CD8-positive, alpha-beta T cell (primary cell): ENCODE measurements at regions of chr2 and their contacts with region 1.

Region 1: DNA sequence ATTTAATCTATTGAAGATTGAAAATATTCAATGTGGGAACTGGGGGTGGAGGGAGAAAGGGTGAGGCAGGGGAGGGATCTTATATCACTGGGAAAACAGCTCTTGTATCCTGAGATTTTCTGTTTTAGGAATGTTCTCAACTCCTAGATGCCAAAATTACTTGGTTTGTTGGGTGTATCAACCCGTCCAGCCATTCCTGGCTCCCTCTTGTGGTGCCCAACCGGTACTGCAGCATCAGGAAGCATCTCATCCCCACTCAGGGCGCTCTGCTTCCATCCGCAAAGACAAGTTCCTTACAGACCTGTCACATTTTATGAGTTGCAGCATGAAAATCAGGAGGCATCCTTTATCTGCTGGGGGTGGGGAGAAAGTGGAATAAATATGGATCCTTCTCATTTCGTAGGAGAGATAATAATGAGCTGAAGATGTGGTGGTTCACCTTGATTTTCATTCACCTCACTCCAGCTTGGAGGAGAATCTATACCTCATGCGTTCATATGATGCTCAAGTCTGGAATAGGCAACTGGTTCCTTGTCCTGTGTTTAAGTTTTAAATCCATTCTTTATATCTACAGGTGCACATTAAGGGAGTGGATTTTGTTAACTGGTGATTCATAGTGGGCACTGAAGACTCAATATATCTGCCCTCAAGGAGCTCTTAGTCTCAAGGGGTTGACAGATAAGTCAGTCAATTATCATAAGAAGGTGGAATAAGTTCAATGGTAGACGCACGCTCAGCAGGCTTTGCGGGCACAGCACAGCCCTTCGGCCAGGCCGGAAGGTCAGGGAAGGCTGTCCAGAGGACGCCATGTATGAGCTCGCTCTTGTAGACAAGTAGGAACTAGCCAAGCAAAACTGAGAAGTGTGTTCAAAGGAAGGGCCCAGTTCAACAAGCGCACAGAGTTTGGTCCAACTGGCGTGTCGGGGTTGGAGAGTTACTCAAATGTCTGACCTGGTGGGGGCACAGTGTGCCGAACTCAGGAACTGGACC is 127.3 kb downstream of the RNF144A start:
- DNase-seq: peak; percentile 13 to 81 (median 62)
- ATAC-seq: peak; percentile 86
- H3K4me3 ChIP-seq: no peak overlapping the region
- H3K4me3 Mint-ChIP-seq: no peak overlapping the region
- H3K27ac ChIP-seq: no peak overlapping the region
- H3K27ac Mint-ChIP-seq: peak overlapping the region; percentile 15
- H3K4me1 ChIP-seq: no peaks in the 10 kb centered on the region
- H3K4me1 Mint-ChIP-seq: peaks cover 16% of the 10 kb centered on the region
- H3K27me3 ChIP-seq: no peaks in the 10 kb centered on the region
- H3K27me3 Mint-ChIP-seq: no peaks in the 10 kb centered on the region
- CTCF ChIP-seq: peak; percentile 97

Region 2: GRCh38 chr2:6545336-6545735 is 499.2 kb before region 1 on chr2:
- CTCF ChIA-PET with region 1: no interaction called
- POLR2A ChIA-PET with region 1: no interaction called
- intact Hi-C with region 1: no loop called
- DNase-seq: no peak
- ATAC-seq: no peak
- H3K4me3 ChIP-seq: no peak overlapping the region
- H3K4me3 Mint-ChIP-seq: no peak overlapping the region
- H3K27ac ChIP-seq: no peak overlapping the region
- H3K27ac Mint-ChIP-seq: no peak overlapping the region
- H3K4me1 ChIP-seq: no peaks in the 10 kb centered on the region
- H3K4me1 Mint-ChIP-seq: no peaks in the 10 kb centered on the region
- H3K27me3 ChIP-seq: no peaks in the 10 kb centered on the region
- H3K27me3 Mint-ChIP-seq: no peaks in the 10 kb centered on the region
- CTCF ChIP-seq: no peak

Region 3: DNA sequence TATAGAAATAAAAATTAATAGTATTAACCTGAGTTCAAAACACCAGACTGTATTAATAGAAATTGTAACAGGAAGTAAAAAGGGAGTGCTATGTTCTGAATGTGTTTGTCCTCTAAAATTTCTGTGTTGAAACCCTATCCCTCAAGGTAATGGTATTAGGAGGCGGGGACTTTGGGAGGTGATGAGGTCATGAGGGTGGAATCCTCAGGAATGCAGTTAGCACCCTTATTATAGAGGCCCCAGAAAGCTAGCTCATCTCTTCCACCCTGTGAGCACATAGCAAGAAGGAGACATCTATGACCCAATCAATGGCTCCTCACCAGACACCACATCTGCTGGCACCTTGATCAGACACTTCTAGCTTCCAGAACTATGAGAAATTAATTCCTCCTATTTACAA is 303.3 kb before region 1 on chr2:
- CTCF ChIA-PET with region 1: no interaction called
- POLR2A ChIA-PET with region 1: no interaction called
- intact Hi-C with region 1: no loop called
- DNase-seq: no peak
- ATAC-seq: no peak
- H3K4me3 ChIP-seq: no peak overlapping the region
- H3K4me3 Mint-ChIP-seq: no peak overlapping the region
- H3K27ac ChIP-seq: no peak overlapping the region
- H3K27ac Mint-ChIP-seq: no peak overlapping the region
- H3K4me1 ChIP-seq: no peaks in the 10 kb centered on the region
- H3K4me1 Mint-ChIP-seq: no peaks in the 10 kb centered on the region
- H3K27me3 ChIP-seq: no peaks in the 10 kb centered on the region
- H3K27me3 Mint-ChIP-seq: peaks cover 19% of the 10 kb centered on the region
- CTCF ChIP-seq: no peak

Region 4: GRCh38 chr2:6877402-6878304 is 166.9 kb before region 1 on chr2 and contains the start of gene RSAD2:
- CTCF ChIA-PET with region 1: interaction called, 17 read pairs
- POLR2A ChIA-PET with region 1: interaction called, 3 read pairs
- intact Hi-C with region 1: no loop called
- DNase-seq: peak in 7 of 9 experiments; percentile 16 to 81 (median 47)
- ATAC-seq: peak; percentile 84
- H3K4me3 ChIP-seq: peak within 1 kb of the TSS; percentile 56 to 63
- H3K4me3 Mint-ChIP-seq: peak within 1 kb of the TSS; percentile 88
- H3K27ac ChIP-seq: peak within 1 kb of the TSS; percentile 34 to 47
- H3K27ac Mint-ChIP-seq: peak within 1 kb of the TSS; percentile 87
- H3K4me1 ChIP-seq: peaks cover 59% of the 10 kb centered on the region
- H3K4me1 Mint-ChIP-seq: peaks cover 66% of the 10 kb centered on the region
- H3K27me3 ChIP-seq: no peaks in the 10 kb centered on the region
- H3K27me3 Mint-ChIP-seq: no peaks in the 10 kb centered on the region
- CTCF ChIP-seq: no peak
- total RNA-seq, gene RSAD2: 1.8 to 2.1 TPM

Region 5: DNA sequence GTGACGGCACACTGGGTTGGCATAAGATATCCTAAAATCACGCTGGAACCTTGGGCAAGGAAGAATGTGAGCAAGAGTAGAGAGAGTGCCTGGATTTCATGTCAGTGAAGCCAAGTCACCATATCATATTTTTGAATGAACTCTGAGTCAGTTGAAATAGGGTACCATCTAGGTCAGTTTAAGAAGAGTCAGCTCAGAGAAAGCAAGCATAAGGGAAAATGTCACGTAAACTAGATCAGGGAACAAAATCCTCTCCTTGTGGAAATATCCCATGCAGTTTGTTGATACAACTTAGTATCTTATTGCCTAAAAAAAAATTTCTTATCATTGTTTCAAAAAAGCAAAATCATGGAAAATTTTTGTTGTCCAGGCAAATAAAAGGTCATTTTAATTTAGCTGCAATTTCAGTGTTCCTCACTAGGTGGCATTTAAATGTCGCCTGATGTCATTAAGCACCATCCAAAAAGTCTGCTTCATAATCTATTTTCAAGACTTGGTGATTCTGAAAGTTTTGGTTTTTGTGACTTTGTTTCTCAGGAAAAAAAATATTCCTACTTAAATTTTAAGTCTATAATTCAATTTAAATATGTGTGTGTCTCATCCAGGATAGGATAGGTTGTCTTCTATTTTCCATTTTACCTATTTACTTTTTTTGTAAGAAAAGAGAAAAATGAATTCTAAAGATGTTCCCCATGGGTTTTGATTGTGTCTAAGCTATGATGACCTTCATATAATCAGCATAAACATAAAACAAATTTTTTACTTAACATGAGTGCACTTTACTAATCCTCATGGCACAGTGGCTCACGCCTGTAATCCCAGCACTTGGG is 147.4 kb before region 1 on chr2:
- CTCF ChIA-PET with region 1: interaction called, 81 read pairs
- POLR2A ChIA-PET with region 1: interaction called, 7 read pairs
- intact Hi-C with region 1: loop called (anchors 1 kb)
- DNase-seq: peak in 2 of 9 experiments; percentile 61 to 70
- ATAC-seq: peak; percentile 58
- H3K4me3 ChIP-seq: no peak overlapping the region
- H3K4me3 Mint-ChIP-seq: no peak overlapping the region
- H3K27ac ChIP-seq: no peak overlapping the region
- H3K27ac Mint-ChIP-seq: no peak overlapping the region
- H3K4me1 ChIP-seq: peaks cover 7% of the 10 kb centered on the region
- H3K4me1 Mint-ChIP-seq: peaks cover 5% of the 10 kb centered on the region
- H3K27me3 ChIP-seq: no peaks in the 10 kb centered on the region
- H3K27me3 Mint-ChIP-seq: no peaks in the 10 kb centered on the region
- CTCF ChIP-seq: peak; percentile 95

Region 6: GRCh38 chr2:7014174-7014640 is 30.3 kb before region 1 on chr2:
- CTCF ChIA-PET with region 1: interaction called, 11 read pairs
- POLR2A ChIA-PET with region 1: no interaction called
- intact Hi-C with region 1: no loop called
- DNase-seq: peak in 4 of 9 experiments; percentile 23 to 57 (median 45)
- ATAC-seq: peak; percentile 68
- H3K4me3 ChIP-seq: no peak overlapping the region
- H3K4me3 Mint-ChIP-seq: no peak overlapping the region
- H3K27ac ChIP-seq: no peak overlapping the region
- H3K27ac Mint-ChIP-seq: no peak overlapping the region
- H3K4me1 ChIP-seq: no peaks in the 10 kb centered on the region
- H3K4me1 Mint-ChIP-seq: peaks cover 30% of the 10 kb centered on the region
- H3K27me3 ChIP-seq: no peaks in the 10 kb centered on the region
- H3K27me3 Mint-ChIP-seq: no peaks in the 10 kb centered on the region
- CTCF ChIP-seq: peak; percentile 45

Region 7: GRCh38 chr2:7031547-7032245 is 12.9 kb before region 1 on chr2:
- CTCF ChIA-PET with region 1: interaction called, 37 read pairs
- POLR2A ChIA-PET with region 1: interaction called, 5 read pairs
- intact Hi-C with region 1: no loop called
- DNase-seq: peak; percentile 13 to 77 (median 51)
- ATAC-seq: peak; percentile 91
- H3K4me3 ChIP-seq: no peak overlapping the region
- H3K4me3 Mint-ChIP-seq: no peak overlapping the region
- H3K27ac ChIP-seq: peak overlapping the region in 1 of 2 experiments; percentile 24
- H3K27ac Mint-ChIP-seq: peak overlapping the region; percentile 69
- H3K4me1 ChIP-seq: peaks cover 6% of the 10 kb centered on the region
- H3K4me1 Mint-ChIP-seq: peaks cover 11% of the 10 kb centered on the region
- H3K27me3 ChIP-seq: no peaks in the 10 kb centered on the region
- H3K27me3 Mint-ChIP-seq: no peaks in the 10 kb centered on the region
- CTCF ChIP-seq: no peak

Region 8: DNA sequence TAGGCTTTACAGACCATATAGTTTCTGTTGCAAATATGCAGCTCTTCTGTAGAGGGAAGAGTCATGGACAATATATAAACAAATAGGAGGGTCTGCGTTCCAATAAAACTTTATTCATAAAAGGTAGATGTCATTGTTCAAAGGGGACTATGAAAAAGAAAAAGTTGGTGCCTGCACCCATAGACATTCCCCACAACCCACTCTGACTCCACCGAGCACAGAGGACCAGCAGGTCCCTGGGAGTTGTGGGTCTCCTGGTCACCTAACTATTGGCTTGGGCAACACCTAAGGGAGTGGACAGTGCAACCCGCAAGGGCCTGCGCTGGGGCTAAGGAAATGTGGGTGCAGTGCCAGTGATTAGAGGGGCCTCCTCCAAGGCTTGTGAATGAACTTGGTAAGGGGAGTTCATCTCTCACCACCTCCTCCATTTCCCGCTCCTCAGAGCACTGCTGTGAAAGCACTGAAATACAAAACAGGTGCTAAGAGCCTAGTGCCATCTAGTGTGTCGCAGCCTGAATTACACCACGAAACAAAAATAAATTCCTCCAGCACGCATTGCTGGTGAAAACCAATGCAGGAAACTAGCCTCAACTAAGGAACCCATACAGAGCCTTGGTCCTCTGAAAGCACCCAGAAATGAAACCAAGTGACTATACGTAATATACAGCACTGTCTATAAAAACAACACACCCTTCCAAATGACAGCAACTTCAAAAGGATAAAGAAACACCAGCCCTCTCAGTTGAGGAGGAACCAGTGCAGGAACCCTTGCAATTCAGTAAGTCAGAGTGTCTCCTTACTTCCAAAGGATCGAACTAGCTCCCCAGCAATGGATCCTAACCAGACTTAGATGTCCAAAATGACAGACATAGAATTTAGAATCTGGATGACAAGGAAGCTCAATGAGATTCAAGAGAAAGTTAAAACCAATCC is 39.3 kb after region 1 on chr2:
- CTCF ChIA-PET with region 1: interaction called, 16 read pairs
- POLR2A ChIA-PET with region 1: no interaction called
- intact Hi-C with region 1: no loop called
- DNase-seq: peak in 2 of 9 experiments; percentile 23 to 31
- ATAC-seq: no peak
- H3K4me3 ChIP-seq: no peak overlapping the region
- H3K4me3 Mint-ChIP-seq: no peak overlapping the region
- H3K27ac ChIP-seq: no peak overlapping the region
- H3K27ac Mint-ChIP-seq: no peak overlapping the region
- H3K4me1 ChIP-seq: no peaks in the 10 kb centered on the region
- H3K4me1 Mint-ChIP-seq: no peaks in the 10 kb centered on the region
- H3K27me3 ChIP-seq: no peaks in the 10 kb centered on the region
- H3K27me3 Mint-ChIP-seq: no peaks in the 10 kb centered on the region
- CTCF ChIP-seq: peak; percentile 33